CD4-positive, alpha-beta memory T cell (primary cell): ENCODE measurements at regions of chr15 and their contacts with region 1.

Region 1: DNA sequence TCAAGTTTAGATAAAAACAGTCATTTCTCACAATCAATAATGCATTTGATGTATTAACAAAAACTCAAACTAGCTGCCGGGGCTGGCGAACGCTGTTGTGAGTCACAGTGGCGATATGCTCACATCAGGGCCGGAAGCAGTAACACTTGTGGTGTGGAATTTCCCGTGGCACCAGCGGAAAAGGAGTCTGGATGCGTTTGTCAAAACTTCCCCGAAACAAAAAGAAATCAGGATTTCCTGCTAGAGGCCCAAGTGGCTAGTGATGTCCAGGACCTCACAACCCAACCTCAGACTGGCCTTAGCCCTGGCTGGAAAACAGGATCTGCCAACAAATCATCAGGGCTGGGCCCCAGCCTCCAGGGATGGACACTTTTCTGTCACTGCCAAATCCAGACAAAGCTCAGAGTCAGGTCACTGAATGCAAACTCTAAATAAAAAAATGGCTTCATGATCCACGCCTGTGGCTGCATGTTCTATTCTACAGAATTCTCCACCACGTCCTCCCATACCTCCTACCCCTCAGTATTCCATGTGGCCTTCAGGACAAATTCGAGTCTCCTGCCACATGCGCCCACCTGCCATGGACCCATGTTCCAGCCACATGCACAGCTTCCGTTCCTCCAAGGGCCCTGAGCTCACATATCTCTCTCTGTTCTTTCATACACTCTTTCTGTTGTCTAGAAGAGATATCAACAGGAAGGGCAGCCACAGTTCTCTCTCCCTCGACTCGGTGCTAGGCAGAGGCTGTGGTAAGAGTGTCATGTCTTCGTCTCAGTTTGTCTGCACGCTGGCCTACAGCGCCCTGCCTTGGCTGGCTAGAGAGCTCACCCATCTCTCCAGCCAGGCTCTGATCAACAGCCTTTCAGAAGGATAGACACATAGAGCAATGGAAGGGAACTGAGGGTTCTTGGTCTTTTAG is 35.4 kb downstream of the EHD4 start:
- DNase-seq: peak; percentile 80 to 95 (median 81)
- H3K4me3 ChIP-seq: peak overlapping the region in 1 of 2 donors; percentile 12
- H3K4me3 Mint-ChIP-seq: peak overlapping the region; percentile 77 to 95 (median 89)
- H3K27ac ChIP-seq: peak overlapping the region; percentile 97
- H3K27ac Mint-ChIP-seq: peak overlapping the region; percentile 94 to 100 (median 100)
- H3K4me1 ChIP-seq: peaks cover 75% of the 10 kb centered on the region
- H3K4me1 Mint-ChIP-seq: peaks cover 46 to 76% (median 67%) of the 10 kb centered on the region in 4 donors
- H3K27me3 ChIP-seq: no peaks in the 10 kb centered on the region
- H3K27me3 Mint-ChIP-seq: no peaks in the 10 kb centered on the region

Region 2: GRCh38 chr15:41827880-41828806 is 108.8 kb before region 1 on chr15 and contains the start of gene JMJD7:
- CTCF ChIA-PET with region 1: interaction called, 7 read pairs
- POLR2A ChIA-PET with region 1: interaction called, 17 read pairs
- intact Hi-C with region 1: loop called (anchors 1 kb)
- DNase-seq: peak; percentile 88 to 92 (median 89)
- H3K4me3 ChIP-seq: peak within 1 kb of the TSS; percentile 94 to 95
- H3K4me3 Mint-ChIP-seq: peak within 1 kb of the TSS; percentile 91 to 99 (median 94)
- H3K27ac ChIP-seq: peak within 1 kb of the TSS; percentile 74
- H3K27ac Mint-ChIP-seq: peak within 1 kb of the TSS; percentile 83 to 98 (median 95)
- H3K4me1 ChIP-seq: peaks cover 48% of the 10 kb centered on the region
- H3K4me1 Mint-ChIP-seq: peaks cover 30 to 54% (median 43%) of the 10 kb centered on the region in 4 donors
- H3K27me3 ChIP-seq: no peaks in the 10 kb centered on the region
- H3K27me3 Mint-ChIP-seq: no peaks in the 10 kb centered on the region
- total RNA-seq, gene JMJD7: 75.0 to 78.5 TPM

Region 3: GRCh38 chr15:41894791-41895463 is 42.0 kb before region 1 on chr15:
- CTCF ChIA-PET with region 1: interaction called, 127 read pairs
- POLR2A ChIA-PET with region 1: interaction called, 28 read pairs
- intact Hi-C with region 1: loop called (anchors 2 kb)
- DNase-seq: peak; percentile 86 to 95 (median 87)
- H3K4me3 ChIP-seq: peak overlapping the region; percentile 12 to 29
- H3K4me3 Mint-ChIP-seq: peak overlapping the region; percentile 69 to 91 (median 80)
- H3K27ac ChIP-seq: peak overlapping the region; percentile 80
- H3K27ac Mint-ChIP-seq: peak overlapping the region; percentile 97 to 99 (median 99)
- H3K4me1 ChIP-seq: peaks cover 38% of the 10 kb centered on the region
- H3K4me1 Mint-ChIP-seq: peaks cover 14 to 66% (median 36%) of the 10 kb centered on the region in 4 donors
- H3K27me3 ChIP-seq: no peaks in the 10 kb centered on the region
- H3K27me3 Mint-ChIP-seq: no peaks in the 10 kb centered on the region

Region 4: GRCh38 chr15:41921167-41921566 is 15.7 kb before region 1 on chr15:
- CTCF ChIA-PET with region 1: interaction called, 19 read pairs
- POLR2A ChIA-PET with region 1: interaction called, 16 read pairs
- intact Hi-C with region 1: loop called (anchors 1 kb)
- DNase-seq: no peak
- H3K4me3 ChIP-seq: no peak overlapping the region
- H3K4me3 Mint-ChIP-seq: no peak overlapping the region
- H3K27ac ChIP-seq: no peak overlapping the region
- H3K27ac Mint-ChIP-seq: peak overlapping the region in 3 of 7 donors; percentile 19 to 54 (median 36)
- H3K4me1 ChIP-seq: peaks cover 3% of the 10 kb centered on the region
- H3K4me1 Mint-ChIP-seq: peaks cover 5 to 17% (median 12%) of the 10 kb centered on the region in 4 donors
- H3K27me3 ChIP-seq: no peaks in the 10 kb centered on the region
- H3K27me3 Mint-ChIP-seq: no peaks in the 10 kb centered on the region

Region 5: GRCh38 chr15:41952013-41952563 is 15.2 kb after region 1 on chr15:
- CTCF ChIA-PET with region 1: interaction called, 6 read pairs
- POLR2A ChIA-PET with region 1: interaction called, 18 read pairs
- intact Hi-C with region 1: no loop called
- DNase-seq: no peak
- H3K4me3 ChIP-seq: no peak overlapping the region
- H3K4me3 Mint-ChIP-seq: no peak overlapping the region
- H3K27ac ChIP-seq: no peak overlapping the region
- H3K27ac Mint-ChIP-seq: peak overlapping the region in 1 of 7 donors; percentile 26
- H3K4me1 ChIP-seq: peaks cover 3% of the 10 kb centered on the region
- H3K4me1 Mint-ChIP-seq: peaks cover 0 to 12% (median 3%) of the 10 kb centered on the region in 4 donors
- H3K27me3 ChIP-seq: no peaks in the 10 kb centered on the region
- H3K27me3 Mint-ChIP-seq: no peaks in the 10 kb centered on the region

Region 6: GRCh38 chr15:42084460-42085235 is 147.7 kb after region 1 on chr15:
- CTCF ChIA-PET with region 1: no interaction called
- POLR2A ChIA-PET with region 1: no interaction called
- intact Hi-C with region 1: no loop called
- DNase-seq: peak in 4 of 5 donors; percentile 19 to 34 (median 22)
- H3K4me3 ChIP-seq: no peak overlapping the region
- H3K4me3 Mint-ChIP-seq: peak overlapping the region in 3 of 8 donors; percentile 33 to 38 (median 36)
- H3K27ac ChIP-seq: no peak overlapping the region
- H3K27ac Mint-ChIP-seq: peak overlapping the region in 2 of 7 donors; percentile 9 to 41
- H3K4me1 ChIP-seq: peaks cover 10% of the 10 kb centered on the region
- H3K4me1 Mint-ChIP-seq: peaks cover 0 to 10% (median 2%) of the 10 kb centered on the region in 4 donors
- H3K27me3 ChIP-seq: no peaks in the 10 kb centered on the region
- H3K27me3 Mint-ChIP-seq: peaks cover 6% of the 10 kb centered on the region in 2 donors

Region 7: GRCh38 chr15:42332331-42332730 is 395.4 kb after region 1 on chr15:
- CTCF ChIA-PET with region 1: no interaction called
- POLR2A ChIA-PET with region 1: no interaction called
- intact Hi-C with region 1: no loop called
- DNase-seq: no peak
- H3K4me3 ChIP-seq: no peak overlapping the region
- H3K4me3 Mint-ChIP-seq: no peak overlapping the region
- H3K27ac ChIP-seq: no peak overlapping the region
- H3K27ac Mint-ChIP-seq: no peak overlapping the region
- H3K4me1 ChIP-seq: no peaks in the 10 kb centered on the region
- H3K4me1 Mint-ChIP-seq: no peaks in the 10 kb centered on the region
- H3K27me3 ChIP-seq: no peaks in the 10 kb centered on the region
- H3K27me3 Mint-ChIP-seq: no peaks in the 10 kb centered on the region